ENCODE measurements at regions of chr17 and their contacts with region 1.

Region 1: DNA sequence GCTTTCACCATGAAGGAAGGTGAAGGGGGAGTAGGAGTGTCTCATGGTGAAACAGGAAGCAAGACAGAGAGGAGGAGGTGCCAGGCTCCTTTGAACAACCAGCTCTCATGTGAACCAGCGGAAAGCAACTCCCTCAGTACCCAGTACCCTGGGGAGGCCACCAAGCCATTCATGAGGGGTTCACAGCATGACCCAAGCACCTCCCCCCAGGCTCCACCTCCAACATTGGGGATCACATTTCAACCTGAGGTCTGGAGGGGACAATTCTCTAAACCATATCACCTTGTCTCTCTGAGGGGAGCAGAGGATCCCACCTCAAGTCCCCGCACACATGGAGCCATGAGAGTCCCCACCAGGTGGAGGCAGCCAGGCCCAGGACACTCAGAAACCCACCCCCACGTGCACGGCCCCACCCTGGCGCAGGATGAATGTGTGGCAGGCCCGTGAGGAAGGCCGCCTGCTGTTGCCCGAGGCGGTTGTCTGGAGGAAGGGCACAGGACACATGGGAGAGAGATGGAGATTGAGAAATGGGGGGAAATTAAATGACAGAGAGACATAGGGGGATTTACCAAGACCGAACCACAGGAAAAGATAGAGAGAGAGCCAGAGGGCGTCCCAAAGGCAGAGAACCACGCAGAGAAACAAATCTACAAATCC is 85.9 kb downstream of the TMEM132E start:
- DNase-seq: no peak
- H3K4me3 ChIP-seq: no peak overlapping the region
- H3K27ac ChIP-seq: no peak overlapping the region
- H3K4me1 ChIP-seq: no peaks in the 10 kb centered on the region
- H3K27me3 ChIP-seq: no peaks in the 10 kb centered on the region
- CTCF ChIP-seq: no peak

Region 2: GRCh38 chr17:34637548-34638525 is 27.4 kb before region 1 on chr17:
- CTCF ChIA-PET with region 1: no interaction called
- dilution Hi-C with region 1: no loop called
- in situ Hi-C with region 1: no loop called
- intact Hi-C with region 1: no loop called
- DNase-seq: peak; percentile 32
- H3K4me3 ChIP-seq: peak overlapping the region in 1 of 3 experiments; percentile 3
- H3K27ac ChIP-seq: no peak overlapping the region
- H3K4me1 ChIP-seq: peaks cover 7% of the 10 kb centered on the region
- H3K27me3 ChIP-seq: no peaks in the 10 kb centered on the region
- CTCF ChIP-seq: peak; percentile 85 to 94

Region 3: GRCh38 chr17:34740565-34741520 is 75.6 kb after region 1 on chr17:
- CTCF ChIA-PET with region 1: no interaction called
- dilution Hi-C with region 1: no loop called
- in situ Hi-C with region 1: no loop called
- intact Hi-C with region 1: no loop called
- DNase-seq: no peak
- H3K4me3 ChIP-seq: no peak overlapping the region
- H3K27ac ChIP-seq: no peak overlapping the region
- H3K4me1 ChIP-seq: no peaks in the 10 kb centered on the region
- H3K27me3 ChIP-seq: no peaks in the 10 kb centered on the region
- CTCF ChIP-seq: no peak

Region 4: GRCh38 chr17:34764716-34765115 is 99.4 kb after region 1 on chr17:
- CTCF ChIA-PET with region 1: no interaction called
- dilution Hi-C with region 1: loop called (anchors 5 kb)
- in situ Hi-C with region 1: no loop called
- intact Hi-C with region 1: no loop called
- DNase-seq: no peak
- H3K4me3 ChIP-seq: no peak overlapping the region
- H3K27ac ChIP-seq: no peak overlapping the region
- H3K4me1 ChIP-seq: no peaks in the 10 kb centered on the region
- H3K27me3 ChIP-seq: no peaks in the 10 kb centered on the region
- CTCF ChIP-seq: no peak

Measured in mammary epithelial cell (primary cell).